ENCODE measurements at regions of chr4 and their contacts with region 1.

Region 1: GRCh38 chr4:2536193-2537010 is at the start of gene FAM193A:
- DNase-seq: peak; percentile 97 to 99
- ATAC-seq: peak; percentile 93 to 98 (median 93)
- H3K4me3 ChIP-seq: peak within 1 kb of the TSS; percentile 57
- H3K4me3 Mint-ChIP-seq: peak within 1 kb of the TSS; percentile 88
- H3K27ac ChIP-seq: peak within 1 kb of the TSS; percentile 71
- H3K27ac Mint-ChIP-seq: peak within 1 kb of the TSS; percentile 83 to 89
- H3K4me1 ChIP-seq: peaks cover 27% of the 10 kb centered on the region
- H3K4me1 Mint-ChIP-seq: peaks cover 10 to 14% of the 10 kb centered on the region in 2 donors
- H3K27me3 ChIP-seq: no peaks in the 10 kb centered on the region
- H3K27me3 Mint-ChIP-seq: no peaks in the 10 kb centered on the region
- CTCF ChIP-seq: no peak
- total RNA-seq, gene FAM193A: 39.4 to 49.3 (median 48.1) TPM

Region 2: GRCh38 chr4:2212831-2213230 is 323.6 kb before region 1 on chr4:
- intact Hi-C with region 1: no loop called
- DNase-seq: no peak
- ATAC-seq: no peak
- H3K4me3 ChIP-seq: no peak overlapping the region
- H3K4me3 Mint-ChIP-seq: no peak overlapping the region
- H3K27ac ChIP-seq: no peak overlapping the region
- H3K27ac Mint-ChIP-seq: no peak overlapping the region
- H3K4me1 ChIP-seq: no peaks in the 10 kb centered on the region
- H3K4me1 Mint-ChIP-seq: no peaks in the 10 kb centered on the region
- H3K27me3 ChIP-seq: no peaks in the 10 kb centered on the region
- H3K27me3 Mint-ChIP-seq: no peaks in the 10 kb centered on the region
- CTCF ChIP-seq: no peak

Region 3: GRCh38 chr4:2552806-2553205 is 16.4 kb after region 1 on chr4:
- intact Hi-C with region 1: no loop called
- DNase-seq: no peak
- ATAC-seq: no peak
- H3K4me3 ChIP-seq: no peak overlapping the region
- H3K4me3 Mint-ChIP-seq: no peak overlapping the region
- H3K27ac ChIP-seq: no peak overlapping the region
- H3K27ac Mint-ChIP-seq: no peak overlapping the region
- H3K4me1 ChIP-seq: peaks cover 3% of the 10 kb centered on the region
- H3K4me1 Mint-ChIP-seq: peaks cover 21 to 30% of the 10 kb centered on the region in 2 donors
- H3K27me3 ChIP-seq: no peaks in the 10 kb centered on the region
- H3K27me3 Mint-ChIP-seq: no peaks in the 10 kb centered on the region
- CTCF ChIP-seq: no peak

Region 4: DNA sequence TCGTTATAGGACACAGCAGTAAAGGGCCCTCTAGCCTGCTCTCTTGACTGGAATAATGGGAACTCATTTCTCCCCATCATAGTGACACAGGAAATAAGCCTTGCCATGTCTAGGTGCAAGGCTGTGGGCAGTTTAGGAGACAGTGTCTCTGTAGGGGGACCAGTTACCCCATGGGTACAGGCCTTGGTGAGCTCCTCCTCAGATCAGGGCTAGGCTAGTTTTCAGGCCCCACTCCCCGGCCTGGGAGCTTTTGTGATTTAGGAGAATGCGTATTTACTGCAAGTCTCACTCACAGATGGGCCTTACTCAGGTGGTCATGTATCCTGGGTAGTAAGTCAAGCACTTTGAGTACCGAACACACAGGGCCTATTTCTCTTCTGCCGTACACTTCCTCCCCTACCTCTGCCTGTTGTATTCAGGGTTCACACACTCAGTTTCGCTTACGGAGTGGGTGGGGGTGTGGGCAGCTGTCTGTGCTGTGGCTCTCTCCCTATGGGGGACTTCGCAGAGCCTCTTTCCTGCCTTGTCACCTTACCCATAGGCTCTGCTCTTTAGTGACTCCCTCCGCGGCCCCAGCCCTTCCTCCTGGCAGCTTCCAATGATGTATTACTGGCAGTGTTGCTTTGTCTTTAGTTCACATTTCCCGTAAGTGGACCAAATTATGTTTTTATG is 34.3 kb after region 1 on chr4:
- intact Hi-C with region 1: loop called (anchors 2 kb)
- DNase-seq: peak; percentile 72 to 78
- ATAC-seq: peak; percentile 99 to 100 (median 99)
- H3K4me3 ChIP-seq: no peak overlapping the region
- H3K4me3 Mint-ChIP-seq: peak overlapping the region; percentile 76
- H3K27ac ChIP-seq: peak overlapping the region; percentile 60
- H3K27ac Mint-ChIP-seq: peak overlapping the region; percentile 93 to 94
- H3K4me1 ChIP-seq: peaks cover 17% of the 10 kb centered on the region
- H3K4me1 Mint-ChIP-seq: peaks cover 37 to 53% of the 10 kb centered on the region in 2 donors
- H3K27me3 ChIP-seq: no peaks in the 10 kb centered on the region
- H3K27me3 Mint-ChIP-seq: no peaks in the 10 kb centered on the region
- CTCF ChIP-seq: no peak